Mammary epithelial cell (primary cell): ENCODE measurements at regions of chr2 and their contacts with region 1.

Region 1: DNA sequence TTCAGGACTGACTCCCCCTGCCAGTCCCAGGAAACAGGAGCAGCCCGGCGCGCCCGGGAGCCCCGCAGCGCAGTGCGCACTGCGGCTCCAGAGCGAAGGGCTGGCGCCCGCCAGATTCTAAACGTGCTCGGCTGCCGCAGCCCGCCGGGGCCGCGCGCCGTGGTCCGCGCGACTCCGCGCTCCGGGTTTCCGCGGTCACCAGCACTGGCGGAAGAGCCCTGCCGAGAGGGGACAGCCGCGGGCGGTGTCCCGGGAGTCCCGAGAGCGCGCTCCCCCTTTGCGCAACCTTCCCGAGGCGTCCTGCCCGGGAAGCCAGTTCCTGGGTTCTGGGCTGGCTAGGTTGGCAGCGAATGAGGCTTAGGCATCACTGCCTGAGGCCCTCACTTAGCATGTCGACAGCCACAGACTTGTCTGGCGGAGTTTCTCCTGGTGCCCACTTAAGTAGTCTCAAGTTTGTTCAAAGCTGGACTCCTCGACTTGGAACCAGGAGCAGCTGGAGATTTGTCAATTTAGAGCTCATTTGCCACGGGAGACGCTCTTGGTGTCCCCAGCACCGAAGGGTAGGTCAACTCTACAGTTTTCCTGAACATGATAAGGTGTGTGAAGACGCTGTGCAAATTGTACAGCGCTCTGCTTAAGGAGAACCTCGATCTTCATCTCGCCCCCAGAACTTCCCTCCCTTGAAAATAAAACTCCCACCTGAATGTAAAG is 1.5 kb upstream of the VSNL1 start:
- DNase-seq: peak; percentile 95
- H3K4me3 ChIP-seq: peak overlapping the region; percentile 56 to 85 (median 72)
- H3K27ac ChIP-seq: peak overlapping the region; percentile 95
- H3K4me1 ChIP-seq: peaks cover 32% of the 10 kb centered on the region
- H3K27me3 ChIP-seq: no peaks in the 10 kb centered on the region
- CTCF ChIP-seq: no peak

Region 2: GRCh38 chr2:17299891-17300540 is 239.0 kb before region 1 on chr2:
- CTCF ChIA-PET with region 1: no interaction called
- dilution Hi-C with region 1: no loop called
- in situ Hi-C with region 1: no loop called
- intact Hi-C with region 1: loop called (anchors 1 kb)
- DNase-seq: peak; percentile 99
- H3K4me3 ChIP-seq: no peak overlapping the region
- H3K27ac ChIP-seq: peak overlapping the region; percentile 82
- H3K4me1 ChIP-seq: peaks cover 35% of the 10 kb centered on the region
- H3K27me3 ChIP-seq: no peaks in the 10 kb centered on the region
- CTCF ChIP-seq: no peak

Region 3: DNA sequence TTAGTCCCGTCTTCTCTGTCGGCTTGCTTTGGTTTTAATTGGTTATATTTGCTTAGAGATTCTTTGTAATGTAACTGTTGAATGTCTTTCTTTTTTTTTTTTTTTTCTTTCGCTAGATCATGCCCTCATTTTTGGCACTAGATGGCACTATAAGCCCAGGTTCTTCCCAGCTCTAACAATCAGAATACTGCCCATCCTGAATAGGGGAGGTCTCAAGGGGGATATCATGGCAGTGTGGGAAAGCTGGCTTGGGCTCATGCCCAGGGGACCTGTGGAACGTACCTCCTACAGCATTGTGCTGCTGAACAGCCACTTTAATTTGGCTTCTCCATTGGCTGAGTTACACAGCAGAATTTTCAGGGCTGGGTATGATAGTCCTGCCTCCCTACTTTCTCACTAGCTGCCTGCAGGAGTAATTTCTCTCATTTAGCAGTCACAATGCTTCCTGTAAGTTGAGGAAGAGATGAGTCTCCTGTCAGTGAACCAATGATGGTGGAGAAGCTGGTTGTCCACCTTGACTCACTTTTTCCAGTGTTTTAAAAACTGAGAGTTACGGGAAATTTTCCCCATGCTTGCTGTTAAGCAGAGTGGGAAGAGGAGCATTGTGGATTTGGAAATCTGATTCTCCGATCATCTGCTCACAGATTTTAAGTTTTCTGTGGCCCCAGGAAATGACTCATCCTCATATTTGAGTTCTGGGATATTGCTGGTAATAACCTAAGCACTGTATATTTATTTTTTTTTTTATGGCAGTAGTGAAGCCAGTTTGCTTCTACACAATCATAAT is 68.0 kb before region 1 on chr2:
- CTCF ChIA-PET with region 1: no interaction called
- dilution Hi-C with region 1: no loop called
- in situ Hi-C with region 1: loop called in 1 of 2 experiments (anchors 10 kb)
- intact Hi-C with region 1: loop called (anchors 1 kb)
- DNase-seq: peak; percentile 66
- H3K4me3 ChIP-seq: peak overlapping the region in 1 of 3 experiments; percentile 0
- H3K27ac ChIP-seq: peak overlapping the region; percentile 53
- H3K4me1 ChIP-seq: peaks cover 22% of the 10 kb centered on the region
- H3K27me3 ChIP-seq: no peaks in the 10 kb centered on the region
- CTCF ChIP-seq: peak; percentile 68 to 74

Region 4: GRCh38 chr2:17506736-17507616 is 32.0 kb before region 1 on chr2:
- CTCF ChIA-PET with region 1: no interaction called
- dilution Hi-C with region 1: no loop called
- in situ Hi-C with region 1: no loop called
- intact Hi-C with region 1: no loop called
- DNase-seq: peak; percentile 83
- H3K4me3 ChIP-seq: no peak overlapping the region
- H3K27ac ChIP-seq: peak overlapping the region; percentile 87
- H3K4me1 ChIP-seq: peaks cover 14% of the 10 kb centered on the region
- H3K27me3 ChIP-seq: no peaks in the 10 kb centered on the region
- CTCF ChIP-seq: no peak

Region 5: GRCh38 chr2:17573085-17573803 is 34.2 kb after region 1 on chr2:
- CTCF ChIA-PET with region 1: no interaction called
- dilution Hi-C with region 1: no loop called
- in situ Hi-C with region 1: no loop called
- intact Hi-C with region 1: loop called (anchors 2 kb)
- DNase-seq: peak; percentile 68
- H3K4me3 ChIP-seq: no peak overlapping the region
- H3K27ac ChIP-seq: peak overlapping the region; percentile 27
- H3K4me1 ChIP-seq: peaks cover 14% of the 10 kb centered on the region
- H3K27me3 ChIP-seq: no peaks in the 10 kb centered on the region
- CTCF ChIP-seq: peak in 1 of 2 donors; percentile 34

Region 6: GRCh38 chr2:17620280-17620679 is 81.3 kb after region 1 on chr2:
- CTCF ChIA-PET with region 1: no interaction called
- dilution Hi-C with region 1: loop called (anchors 5 kb)
- in situ Hi-C with region 1: no loop called
- intact Hi-C with region 1: loop called (anchors 2 kb)
- DNase-seq: peak; percentile 91
- H3K4me3 ChIP-seq: peak overlapping the region; percentile 25 to 31 (median 28)
- H3K27ac ChIP-seq: peak overlapping the region; percentile 88
- H3K4me1 ChIP-seq: peaks cover 46% of the 10 kb centered on the region
- H3K27me3 ChIP-seq: no peaks in the 10 kb centered on the region
- CTCF ChIP-seq: no peak

Region 7: GRCh38 chr2:17672583-17673317 is 133.8 kb after region 1 on chr2:
- CTCF ChIA-PET with region 1: interaction called, 4 read pairs
- dilution Hi-C with region 1: no loop called
- in situ Hi-C with region 1: no loop called
- intact Hi-C with region 1: loop called (anchors 1 kb)
- DNase-seq: peak; percentile 80
- H3K4me3 ChIP-seq: no peak overlapping the region
- H3K27ac ChIP-seq: peak overlapping the region; percentile 60
- H3K4me1 ChIP-seq: no peaks in the 10 kb centered on the region
- H3K27me3 ChIP-seq: no peaks in the 10 kb centered on the region
- CTCF ChIP-seq: peak in 1 of 2 donors; percentile 15